ENCODE measurements at regions of chr4 and their contacts with region 1.

Region 1: DNA sequence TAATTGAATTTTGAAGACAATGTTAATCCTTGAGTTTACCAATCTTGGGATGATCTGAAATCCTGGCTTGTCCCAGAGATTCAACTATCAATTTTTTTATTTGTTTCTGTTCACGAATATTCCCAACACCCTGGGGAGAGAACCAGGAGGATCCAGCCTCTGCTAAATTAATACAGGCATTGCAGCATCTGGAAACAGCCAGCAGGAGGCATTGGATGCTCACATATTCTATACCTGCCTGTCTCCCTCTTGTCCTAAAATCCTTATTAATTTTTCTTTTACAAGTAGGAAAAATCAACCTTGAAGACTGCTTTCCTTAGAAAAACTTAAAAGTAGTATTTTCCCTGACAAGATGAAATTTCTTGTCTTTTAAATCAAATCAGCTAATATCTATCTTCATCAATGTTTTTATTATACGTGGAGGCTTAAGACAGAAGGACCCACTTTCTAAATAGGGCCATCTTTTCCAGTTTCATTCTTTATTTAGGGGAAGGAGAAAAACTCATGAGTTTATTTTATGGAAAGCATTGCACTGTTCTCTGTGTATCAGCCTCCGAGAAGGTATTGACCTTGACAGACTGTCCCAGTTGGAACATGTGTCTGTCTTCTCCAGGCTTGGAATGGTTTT is 102.4 kb downstream of the CLNK start:
- DNase-seq: peak; percentile 60
- ATAC-seq: no peak
- H3K4me3 ChIP-seq: no peak overlapping the region
- H3K4me3 Mint-ChIP-seq: no peak overlapping the region
- H3K27ac ChIP-seq: no peak overlapping the region
- H3K27ac Mint-ChIP-seq: no peak overlapping the region
- H3K4me1 ChIP-seq: peaks cover 11 to 21% of the 10 kb centered on the region in 2 donors
- H3K4me1 Mint-ChIP-seq: peaks cover 29% of the 10 kb centered on the region
- H3K27me3 ChIP-seq: no peaks in the 10 kb centered on the region
- H3K27me3 Mint-ChIP-seq: no peaks in the 10 kb centered on the region
- CTCF ChIP-seq: peak; percentile 95

Region 2: GRCh38 chr4:10598829-10599228 is 16.7 kb after region 1 on chr4:
- CTCF ChIA-PET with region 1: no interaction called
- POLR2A ChIA-PET with region 1: no interaction called
- intact Hi-C with region 1: no loop called
- DNase-seq: no peak
- ATAC-seq: no peak
- H3K4me3 ChIP-seq: no peak overlapping the region
- H3K4me3 Mint-ChIP-seq: no peak overlapping the region
- H3K27ac ChIP-seq: no peak overlapping the region
- H3K27ac Mint-ChIP-seq: no peak overlapping the region
- H3K4me1 ChIP-seq: peaks cover 0 to 8% of the 10 kb centered on the region in 2 donors
- H3K4me1 Mint-ChIP-seq: peaks cover 13% of the 10 kb centered on the region
- H3K27me3 ChIP-seq: no peaks in the 10 kb centered on the region
- H3K27me3 Mint-ChIP-seq: no peaks in the 10 kb centered on the region
- CTCF ChIP-seq: no peak

Region 3: GRCh38 chr4:10722957-10723356 is 140.8 kb after region 1 on chr4:
- CTCF ChIA-PET with region 1: no interaction called
- POLR2A ChIA-PET with region 1: no interaction called
- intact Hi-C with region 1: loop called (anchors 10 kb)
- DNase-seq: peak; percentile 61
- ATAC-seq: peak; percentile 83
- H3K4me3 ChIP-seq: peak overlapping the region in 1 of 5 experiments; percentile 13
- H3K4me3 Mint-ChIP-seq: peak overlapping the region; percentile 21
- H3K27ac ChIP-seq: peak overlapping the region in 1 of 2 donors; percentile 9
- H3K27ac Mint-ChIP-seq: peak overlapping the region; percentile 43
- H3K4me1 ChIP-seq: peaks cover 30 to 33% of the 10 kb centered on the region in 2 donors
- H3K4me1 Mint-ChIP-seq: peaks cover 44% of the 10 kb centered on the region
- H3K27me3 ChIP-seq: no peaks in the 10 kb centered on the region
- H3K27me3 Mint-ChIP-seq: no peaks in the 10 kb centered on the region
- CTCF ChIP-seq: no peak

Region 4: DNA sequence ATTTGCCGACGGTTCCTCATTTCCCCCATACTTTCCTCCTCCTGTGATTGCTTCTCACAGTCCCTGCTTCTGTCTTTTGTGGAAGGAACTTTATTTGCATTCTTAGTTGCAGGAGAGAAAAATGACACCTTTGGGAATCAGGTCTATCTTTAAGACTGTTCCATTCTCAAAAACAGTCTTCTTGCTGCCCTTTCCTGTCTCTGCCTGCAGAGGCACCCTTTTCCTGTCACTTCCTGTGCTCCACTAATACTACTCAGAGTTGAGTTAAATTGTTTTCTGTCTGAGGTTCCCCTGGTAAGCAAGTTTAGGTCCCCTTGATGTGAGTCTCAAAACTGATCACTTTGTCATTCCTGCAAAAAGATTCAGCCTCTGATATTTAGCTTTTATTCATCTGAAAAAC is 311.2 kb after region 1 on chr4:
- CTCF ChIA-PET with region 1: interaction called, 3 read pairs
- POLR2A ChIA-PET with region 1: no interaction called
- intact Hi-C with region 1: loop called (anchors 10 kb)
- DNase-seq: peak; percentile 47
- ATAC-seq: peak; percentile 43
- H3K4me3 ChIP-seq: peak overlapping the region in 1 of 5 experiments; percentile 4
- H3K4me3 Mint-ChIP-seq: no peak overlapping the region
- H3K27ac ChIP-seq: no peak overlapping the region
- H3K27ac Mint-ChIP-seq: no peak overlapping the region
- H3K4me1 ChIP-seq: peaks cover 17 to 19% of the 10 kb centered on the region in 2 donors
- H3K4me1 Mint-ChIP-seq: peaks cover 17% of the 10 kb centered on the region
- H3K27me3 ChIP-seq: no peaks in the 10 kb centered on the region
- H3K27me3 Mint-ChIP-seq: no peaks in the 10 kb centered on the region
- CTCF ChIP-seq: peak; percentile 65

Region 5: DNA sequence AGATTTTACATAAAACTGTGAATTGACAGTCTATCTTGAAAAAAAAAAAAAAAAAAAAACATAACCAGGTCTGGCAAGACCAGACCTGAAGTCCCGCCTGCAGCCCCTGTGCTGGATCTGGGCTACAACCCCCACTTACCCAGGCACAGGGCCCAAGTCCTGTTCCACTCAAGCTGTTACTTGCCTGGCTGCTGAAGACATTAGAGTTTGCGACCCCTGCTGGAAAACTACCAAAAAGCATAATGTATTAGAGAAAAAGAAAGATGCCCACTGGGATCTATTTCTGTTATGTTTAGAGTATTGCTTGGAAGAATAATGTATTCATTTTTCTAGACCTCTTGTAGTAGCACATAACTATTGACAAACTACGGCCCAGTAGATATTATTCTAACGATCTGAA is 841.8 kb after region 1 on chr4:
- CTCF ChIA-PET with region 1: interaction called, 41 read pairs
- POLR2A ChIA-PET with region 1: no interaction called
- intact Hi-C with region 1: loop called (anchors 1 kb)
- DNase-seq: peak; percentile 71
- ATAC-seq: no peak
- H3K4me3 ChIP-seq: no peak overlapping the region
- H3K4me3 Mint-ChIP-seq: no peak overlapping the region
- H3K27ac ChIP-seq: no peak overlapping the region
- H3K27ac Mint-ChIP-seq: no peak overlapping the region
- H3K4me1 ChIP-seq: peaks cover 40 to 42% of the 10 kb centered on the region in 2 donors
- H3K4me1 Mint-ChIP-seq: peaks cover 73% of the 10 kb centered on the region
- H3K27me3 ChIP-seq: no peaks in the 10 kb centered on the region
- H3K27me3 Mint-ChIP-seq: no peaks in the 10 kb centered on the region
- CTCF ChIP-seq: peak; percentile 77

Region 6: DNA sequence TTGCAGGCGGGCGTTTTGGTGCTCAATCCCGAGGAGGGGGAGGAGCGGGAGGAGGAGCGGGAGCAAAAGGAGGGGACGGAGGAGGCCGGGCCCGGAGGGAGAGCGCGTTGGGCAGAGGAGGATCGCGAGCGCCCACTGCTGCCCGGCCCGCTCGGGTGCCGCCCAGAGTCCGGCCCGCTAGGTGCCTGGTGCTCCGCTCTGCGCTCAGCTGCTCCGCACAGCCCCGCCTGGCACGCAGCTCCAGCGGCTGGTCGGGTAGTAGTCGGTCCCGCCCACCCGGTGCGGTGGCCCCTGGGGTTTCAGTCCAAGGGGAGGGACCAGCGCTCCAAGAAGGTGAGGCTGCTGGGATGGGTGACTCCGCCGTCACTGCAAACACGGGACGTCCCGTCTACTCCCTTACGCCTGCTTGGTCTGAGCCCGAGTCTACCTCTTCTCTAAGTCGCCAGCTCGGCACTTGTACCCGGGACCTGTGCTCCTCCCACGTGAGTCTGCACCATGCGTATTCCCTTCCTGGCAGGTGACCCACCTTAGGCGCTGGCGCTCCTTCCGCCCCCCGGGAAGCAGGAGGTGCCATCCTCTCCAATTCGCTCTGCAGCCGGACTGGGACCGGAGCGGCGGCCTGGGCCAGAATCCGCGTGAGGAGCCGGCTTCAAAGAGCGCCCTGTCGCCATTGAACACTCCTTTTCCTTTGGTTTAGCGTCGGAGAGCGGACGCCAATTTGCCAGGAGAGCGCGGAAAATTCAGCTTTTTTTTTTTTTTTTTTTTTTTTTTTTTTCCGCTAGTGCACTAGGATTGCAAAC is 846.9 kb after region 1 on chr4:
- CTCF ChIA-PET with region 1: interaction called, 41 read pairs
- POLR2A ChIA-PET with region 1: no interaction called
- intact Hi-C with region 1: loop called (anchors 1 kb)
- DNase-seq: peak; percentile 85
- ATAC-seq: peak; percentile 90
- H3K4me3 ChIP-seq: peak overlapping the region; percentile 70 to 96 (median 79)
- H3K4me3 Mint-ChIP-seq: peak overlapping the region; percentile 88
- H3K27ac ChIP-seq: peak overlapping the region; percentile 46 to 64
- H3K27ac Mint-ChIP-seq: peak overlapping the region; percentile 92
- H3K4me1 ChIP-seq: peaks cover 42 to 50% of the 10 kb centered on the region in 2 donors
- H3K4me1 Mint-ChIP-seq: peaks cover 68% of the 10 kb centered on the region
- H3K27me3 ChIP-seq: no peaks in the 10 kb centered on the region
- H3K27me3 Mint-ChIP-seq: no peaks in the 10 kb centered on the region
- CTCF ChIP-seq: peak; percentile 72

Region 7: GRCh38 chr4:11623726-11624037 is 1041.5 kb after region 1 on chr4:
- CTCF ChIA-PET with region 1: interaction called, 4 read pairs
- POLR2A ChIA-PET with region 1: no interaction called
- intact Hi-C with region 1: loop called (anchors 10 kb)
- DNase-seq: peak; percentile 17
- ATAC-seq: no peak
- H3K4me3 ChIP-seq: no peak overlapping the region
- H3K4me3 Mint-ChIP-seq: no peak overlapping the region
- H3K27ac ChIP-seq: no peak overlapping the region
- H3K27ac Mint-ChIP-seq: no peak overlapping the region
- H3K4me1 ChIP-seq: peaks cover 0 to 4% of the 10 kb centered on the region in 2 donors
- H3K4me1 Mint-ChIP-seq: peaks cover 7% of the 10 kb centered on the region
- H3K27me3 ChIP-seq: no peaks in the 10 kb centered on the region
- H3K27me3 Mint-ChIP-seq: no peaks in the 10 kb centered on the region
- CTCF ChIP-seq: no peak

Region 8: DNA sequence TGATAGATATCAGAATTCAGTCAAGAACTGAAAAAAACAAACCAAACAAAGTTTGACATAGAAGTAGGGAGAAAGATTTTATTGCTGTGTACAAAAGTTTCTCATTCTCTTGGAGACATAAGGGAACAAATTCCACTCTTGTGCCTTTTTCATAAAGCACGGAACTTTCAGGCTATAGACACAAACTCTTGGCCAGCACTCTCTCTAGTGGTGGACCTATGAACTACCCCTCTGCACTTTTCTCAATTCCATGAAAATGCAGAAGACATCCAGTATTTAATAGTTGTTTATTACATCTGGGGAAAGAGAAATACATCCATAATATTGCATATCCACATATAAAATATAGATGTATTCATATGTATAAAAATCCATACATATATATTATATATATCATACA is 1138.1 kb after region 1 on chr4:
- CTCF ChIA-PET with region 1: interaction called, 15 read pairs
- POLR2A ChIA-PET with region 1: no interaction called
- intact Hi-C with region 1: no loop called
- DNase-seq: peak; percentile 34
- ATAC-seq: no peak
- H3K4me3 ChIP-seq: no peak overlapping the region
- H3K4me3 Mint-ChIP-seq: no peak overlapping the region
- H3K27ac ChIP-seq: no peak overlapping the region
- H3K27ac Mint-ChIP-seq: no peak overlapping the region
- H3K4me1 ChIP-seq: no peaks in the 10 kb centered on the region
- H3K4me1 Mint-ChIP-seq: no peaks in the 10 kb centered on the region
- H3K27me3 ChIP-seq: no peaks in the 10 kb centered on the region
- H3K27me3 Mint-ChIP-seq: peaks cover 10% of the 10 kb centered on the region
- CTCF ChIP-seq: peak; percentile 65

Measured in B cell (primary cell).